Left colon (tissue), 2 donors: ENCODE measurements at regions of chr3 and their contacts with region 1.

Region 1: DNA sequence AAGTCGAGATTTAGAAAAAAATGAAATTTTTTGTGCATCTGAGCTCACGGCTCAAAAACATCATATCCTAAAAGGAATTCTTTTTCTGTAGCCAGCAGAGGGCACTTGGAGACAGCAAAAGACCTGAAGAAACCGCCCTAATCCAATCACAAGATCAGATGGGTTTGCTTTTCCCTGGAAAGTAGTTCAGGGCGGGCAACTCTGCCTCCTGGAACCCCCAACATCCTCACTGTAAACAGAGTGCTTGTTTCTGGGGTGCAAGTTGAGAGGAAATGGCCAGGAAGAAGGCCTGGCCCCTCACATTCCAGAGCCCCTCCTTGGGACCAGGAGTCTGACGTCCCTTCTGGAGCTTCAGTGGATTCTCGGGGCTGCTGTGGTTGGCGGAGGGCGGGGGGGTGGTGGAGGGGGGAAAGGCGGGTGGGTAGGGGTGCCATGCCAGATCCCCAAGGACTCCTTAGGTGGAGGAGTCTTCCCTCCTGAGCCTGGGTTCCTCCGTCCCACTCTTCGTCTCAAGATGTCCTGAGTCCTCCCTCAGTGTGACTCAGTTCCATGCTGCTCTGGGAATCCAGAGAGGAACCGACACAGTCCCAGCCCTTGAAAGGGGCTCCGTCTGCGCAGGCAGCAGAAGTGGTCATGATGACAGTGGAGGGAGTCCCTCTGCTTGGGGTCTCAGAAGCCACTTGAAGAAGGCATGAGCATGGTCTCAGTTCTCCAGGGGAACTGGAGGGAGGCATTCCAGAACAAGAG is 35.9 kb downstream of the CCK start:
- DNase-seq: no peak
- ATAC-seq: peak; percentile 73

Region 2: DNA sequence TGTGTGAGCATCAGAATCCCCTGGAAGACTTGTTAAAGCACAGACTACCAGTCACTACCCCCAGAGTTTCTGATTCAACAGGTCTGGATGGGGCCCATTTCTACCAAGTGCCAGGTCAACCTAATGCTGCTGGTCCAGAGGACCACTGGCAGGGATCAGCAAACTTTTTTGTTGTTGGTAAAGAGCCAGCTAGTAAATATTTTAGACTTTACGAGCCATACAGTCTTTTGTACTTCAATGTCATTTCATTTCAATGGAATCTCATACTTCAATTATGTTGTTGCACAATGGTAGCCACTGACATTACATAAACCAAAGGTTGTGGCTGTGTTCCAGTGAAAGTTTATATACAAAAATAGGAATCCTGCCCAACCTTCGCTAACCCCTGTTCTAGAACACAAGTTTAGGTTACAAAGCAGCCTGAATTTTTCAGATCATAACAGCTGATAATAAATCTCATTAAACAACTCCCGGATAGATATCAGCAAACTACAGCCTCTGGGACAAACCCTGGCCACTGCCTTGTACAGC is 296.9 kb before region 1 on chr3:
- intact Hi-C with region 1: no loop called
- DNase-seq: no peak
- ATAC-seq: no peak

Region 3: DNA sequence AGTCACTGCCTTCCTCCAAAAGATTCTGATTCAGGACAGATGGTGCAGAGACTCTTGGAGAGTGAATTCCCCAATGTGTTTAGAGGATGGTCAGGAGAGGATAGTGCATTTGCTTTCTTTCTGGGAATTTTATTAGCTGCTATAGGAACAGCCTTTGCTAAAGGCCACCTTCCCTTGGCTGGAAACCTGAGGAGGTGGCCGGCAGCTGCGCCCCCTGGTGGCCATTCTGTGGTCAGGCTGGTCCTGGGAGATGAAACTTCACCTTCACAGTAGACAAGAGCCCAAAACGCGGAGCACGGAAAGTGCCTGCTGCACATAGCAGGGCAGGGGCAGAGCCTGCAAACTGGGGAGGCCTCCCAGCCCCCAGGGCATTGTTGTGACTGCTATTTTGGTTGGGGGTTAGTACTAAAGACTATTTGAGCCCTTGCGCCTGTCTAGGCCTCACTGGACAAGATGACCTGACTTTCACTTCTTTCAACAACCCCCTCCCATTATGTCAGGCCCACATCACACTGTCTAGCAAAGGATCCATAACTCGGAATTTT is 317.4 kb after region 1 on chr3:
- intact Hi-C with region 1: loop called in 1 of 2 experiments (anchors 10 kb)
- DNase-seq: peak; percentile 53 to 80
- ATAC-seq: peak; percentile 63